ENCODE measurements at regions of chr4 and their contacts with region 1.

Region 1: DNA sequence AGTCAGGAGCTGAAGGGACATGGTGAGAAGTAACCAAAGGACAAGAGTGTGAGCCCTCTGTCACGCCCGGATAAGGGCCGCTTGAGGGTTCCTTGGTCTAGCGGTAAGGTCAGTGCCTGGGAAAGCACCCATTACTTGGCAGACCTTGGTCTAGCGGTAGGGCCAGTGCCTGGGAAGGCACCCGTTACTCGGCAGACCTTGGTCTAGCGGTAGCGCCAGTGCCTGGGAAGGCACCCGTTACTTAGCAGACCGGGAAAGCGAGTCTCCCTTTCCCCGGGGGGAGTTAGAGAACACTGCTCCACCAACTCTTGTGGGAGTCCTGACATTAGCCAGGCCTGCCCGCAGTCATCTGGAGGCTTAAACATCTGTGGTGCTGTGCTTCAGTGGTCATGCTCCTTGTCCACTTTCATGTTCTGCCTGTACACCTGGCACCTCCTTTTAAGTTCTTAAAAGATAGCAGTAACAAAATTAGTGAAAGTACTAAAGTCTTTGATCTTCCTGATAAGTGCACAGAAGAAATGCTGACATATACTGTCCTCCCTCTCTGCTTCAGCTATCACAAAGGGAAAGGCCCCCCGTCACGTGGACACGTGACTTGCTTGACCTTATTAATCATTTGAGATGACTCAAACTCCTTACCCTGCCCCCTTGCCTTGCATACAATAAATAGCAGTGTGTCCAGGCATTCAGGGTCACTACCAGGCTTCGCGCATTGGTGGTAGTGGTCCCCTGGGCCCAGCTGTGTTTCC is 9.3 kb upstream of the SEC24B start:
- DNase-seq: no peak
- H3K4me3 Mint-ChIP-seq: no peak overlapping the region
- H3K27ac Mint-ChIP-seq: no peak overlapping the region
- H3K4me1 Mint-ChIP-seq: peaks cover 6% of the 10 kb centered on the region
- H3K27me3 Mint-ChIP-seq: peaks cover 9% of the 10 kb centered on the region

Region 2: DNA sequence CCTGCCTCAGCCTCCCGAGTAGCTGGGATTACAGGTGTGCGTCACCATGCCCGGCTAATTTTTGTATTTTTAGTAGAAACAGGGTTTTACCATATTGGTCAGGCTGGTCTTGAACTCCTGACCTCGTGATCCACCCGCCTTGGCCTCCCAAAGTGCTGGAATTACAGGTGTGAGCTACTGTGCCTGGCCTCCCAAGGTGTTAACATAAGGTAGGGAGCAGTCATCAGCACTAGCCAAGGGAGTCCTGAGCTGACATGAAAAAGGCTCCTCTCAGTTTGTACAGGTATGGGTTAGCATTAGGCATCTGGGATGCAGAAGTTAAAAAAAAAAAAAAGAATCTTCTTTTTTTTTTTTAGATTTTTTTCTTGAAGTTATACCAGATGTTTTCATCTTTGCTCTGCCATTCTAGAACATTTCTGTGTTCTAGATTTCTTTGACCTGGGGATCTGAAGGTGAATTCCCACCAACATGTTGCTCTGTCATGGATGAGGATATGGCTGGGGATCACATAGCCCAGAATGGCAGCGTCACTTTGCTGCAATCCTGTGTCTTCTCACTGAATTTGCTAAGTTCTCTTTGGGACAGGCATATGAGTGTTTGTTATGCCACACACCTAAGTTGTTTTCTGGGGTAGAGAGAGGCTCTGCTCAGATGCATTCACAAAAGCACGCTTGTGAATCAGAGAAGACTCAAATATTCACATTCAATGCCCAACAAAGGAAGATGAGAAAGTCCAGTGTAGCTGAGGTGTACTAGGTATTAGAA is 330.0 kb after region 1 on chr4:
- intact Hi-C with region 1: loop called (anchors 5 kb)
- DNase-seq: peak; percentile 65
- H3K4me3 Mint-ChIP-seq: no peak overlapping the region
- H3K27ac Mint-ChIP-seq: peak overlapping the region; percentile 48
- H3K4me1 Mint-ChIP-seq: no peaks in the 10 kb centered on the region
- H3K27me3 Mint-ChIP-seq: peaks cover 7% of the 10 kb centered on the region

Region 3: GRCh38 chr4:109826719-109827118 is 402.5 kb after region 1 on chr4:
- intact Hi-C with region 1: loop called (anchors 1 kb)
- DNase-seq: no peak
- H3K4me3 Mint-ChIP-seq: no peak overlapping the region
- H3K27ac Mint-ChIP-seq: no peak overlapping the region
- H3K4me1 Mint-ChIP-seq: peaks cover 4% of the 10 kb centered on the region
- H3K27me3 Mint-ChIP-seq: no peaks in the 10 kb centered on the region

Region 4: GRCh38 chr4:109977854-109978501 is 553.7 kb after region 1 on chr4:
- intact Hi-C with region 1: loop called (anchors 1 kb)
- DNase-seq: no peak
- H3K4me3 Mint-ChIP-seq: no peak overlapping the region
- H3K27ac Mint-ChIP-seq: no peak overlapping the region
- H3K4me1 Mint-ChIP-seq: no peaks in the 10 kb centered on the region
- H3K27me3 Mint-ChIP-seq: peaks cover 44% of the 10 kb centered on the region

Region 5: DNA sequence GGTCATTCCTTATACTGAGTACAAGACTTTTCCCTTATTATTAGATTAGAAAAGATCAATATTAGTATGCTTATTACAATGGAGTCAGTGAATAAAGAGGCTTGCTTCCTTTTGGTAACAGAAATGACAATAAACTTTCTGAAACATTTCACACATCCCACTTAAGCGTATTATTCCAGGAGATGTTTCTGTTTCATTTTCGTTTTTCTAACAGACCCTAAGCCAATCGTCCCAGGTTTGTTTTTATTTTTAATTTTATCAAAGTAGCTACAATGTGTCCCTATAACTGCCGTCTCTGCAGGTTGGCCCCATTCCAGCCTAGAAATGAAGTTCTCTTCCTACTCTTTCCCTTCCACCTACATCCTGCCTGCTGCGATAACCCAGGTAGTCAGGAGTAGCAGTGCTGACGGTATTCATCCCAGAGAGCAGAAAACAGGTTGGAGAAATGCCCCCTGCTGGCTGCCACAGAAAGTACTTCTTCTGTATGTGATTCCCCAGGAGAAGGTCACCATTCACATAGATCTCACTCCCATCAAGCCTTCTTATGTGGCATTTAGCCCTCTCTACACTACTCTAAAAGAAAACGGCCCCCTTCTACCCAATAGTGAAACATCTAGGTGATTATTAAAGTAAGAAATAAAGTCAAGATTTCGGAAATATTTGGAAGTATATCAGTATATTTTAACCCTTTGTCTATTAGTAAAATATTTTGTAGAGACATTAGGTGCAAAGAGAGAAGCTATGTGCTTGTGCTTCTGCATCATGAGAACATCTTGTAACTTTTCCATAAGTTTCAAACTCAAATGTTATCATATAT is 1092.0 kb after region 1 on chr4:
- intact Hi-C with region 1: loop called (anchors 5 kb)
- DNase-seq: peak; percentile 90
- H3K4me3 Mint-ChIP-seq: peak overlapping the region; percentile 94
- H3K27ac Mint-ChIP-seq: peak overlapping the region; percentile 64
- H3K4me1 Mint-ChIP-seq: peaks cover 13% of the 10 kb centered on the region
- H3K27me3 Mint-ChIP-seq: peaks cover 13% of the 10 kb centered on the region